Spleen (tissue), 13 donors: ENCODE measurements at regions of chr14 and their contacts with region 1.

Region 1: DNA sequence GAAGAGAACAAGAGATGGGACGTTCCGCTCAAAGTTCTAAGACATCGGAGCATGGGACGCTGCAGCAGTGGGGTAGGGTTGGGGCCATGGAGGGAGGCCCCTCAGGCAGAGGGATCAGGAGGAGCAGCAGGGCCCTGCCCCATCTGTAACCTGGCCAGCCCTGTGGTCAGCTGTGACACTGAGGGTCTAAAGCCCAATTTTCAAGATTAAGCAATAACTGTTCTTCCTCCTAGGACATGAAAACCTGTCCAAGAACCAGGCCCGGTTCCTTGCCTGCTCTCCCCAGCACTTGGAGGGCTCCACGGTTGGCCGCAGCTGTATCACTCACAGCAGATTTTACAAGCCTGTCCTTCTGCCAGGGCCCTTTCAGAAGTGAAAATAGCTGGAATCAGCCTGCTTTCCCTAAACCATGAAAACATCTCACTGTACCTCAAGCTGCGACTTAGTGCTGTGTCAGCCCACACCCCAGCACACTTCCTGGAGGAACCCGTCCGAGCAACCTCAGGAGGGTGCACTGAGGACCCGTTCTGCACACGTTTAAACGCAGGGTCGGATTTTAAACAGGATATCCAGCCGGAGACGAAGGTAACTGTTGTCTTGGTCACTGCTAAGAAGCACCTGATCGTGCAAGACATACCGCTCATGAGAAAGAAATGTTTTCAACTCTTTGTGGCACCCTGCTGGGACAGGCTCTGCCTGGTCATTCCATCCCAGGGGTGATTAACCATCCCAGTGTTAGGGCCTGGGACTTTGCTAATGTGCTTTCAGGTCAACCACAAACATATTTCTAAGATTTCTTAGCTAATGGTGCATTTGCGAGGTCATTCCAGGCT is 201.9 kb upstream of the DIO3 start:
- DNase-seq: peak; percentile 57
- H3K4me3 ChIP-seq: no peak overlapping the region
- H3K27ac ChIP-seq: no peak overlapping the region
- H3K4me1 ChIP-seq: peaks cover 0 to 39% (median 4%) of the 10 kb centered on the region in 6 donors
- H3K27me3 ChIP-seq: peaks cover 0 to 36% (median 0%) of the 10 kb centered on the region in 7 donors
- CTCF ChIP-seq: no peak
- POLR2A ChIP-seq: no peak

Region 2: GRCh38 chr14:101254805-101255764 is 104.4 kb before region 1 on chr14:
- intact Hi-C with region 1: no loop called
- DNase-seq: peak; percentile 53
- H3K4me3 ChIP-seq: no peak overlapping the region
- H3K27ac ChIP-seq: no peak overlapping the region
- H3K4me1 ChIP-seq: no peaks in the 10 kb centered on the region
- H3K27me3 ChIP-seq: peaks cover 0 to 25% (median 0%) of the 10 kb centered on the region in 7 donors
- CTCF ChIP-seq: no peak
- POLR2A ChIP-seq: no peak

Region 3: GRCh38 chr14:101408077-101408896 is 48.9 kb after region 1 on chr14:
- intact Hi-C with region 1: loop called (anchors 5 kb)
- DNase-seq: no peak
- H3K4me3 ChIP-seq: no peak overlapping the region
- H3K27ac ChIP-seq: no peak overlapping the region
- H3K4me1 ChIP-seq: no peaks in the 10 kb centered on the region
- H3K27me3 ChIP-seq: peaks cover 0 to 32% (median under 1%) of the 10 kb centered on the region in 7 donors
- CTCF ChIP-seq: no peak
- POLR2A ChIP-seq: no peak